PC-9 (cell line): ENCODE measurements at regions of chr7 and their contacts with region 1.

Region 1: DNA sequence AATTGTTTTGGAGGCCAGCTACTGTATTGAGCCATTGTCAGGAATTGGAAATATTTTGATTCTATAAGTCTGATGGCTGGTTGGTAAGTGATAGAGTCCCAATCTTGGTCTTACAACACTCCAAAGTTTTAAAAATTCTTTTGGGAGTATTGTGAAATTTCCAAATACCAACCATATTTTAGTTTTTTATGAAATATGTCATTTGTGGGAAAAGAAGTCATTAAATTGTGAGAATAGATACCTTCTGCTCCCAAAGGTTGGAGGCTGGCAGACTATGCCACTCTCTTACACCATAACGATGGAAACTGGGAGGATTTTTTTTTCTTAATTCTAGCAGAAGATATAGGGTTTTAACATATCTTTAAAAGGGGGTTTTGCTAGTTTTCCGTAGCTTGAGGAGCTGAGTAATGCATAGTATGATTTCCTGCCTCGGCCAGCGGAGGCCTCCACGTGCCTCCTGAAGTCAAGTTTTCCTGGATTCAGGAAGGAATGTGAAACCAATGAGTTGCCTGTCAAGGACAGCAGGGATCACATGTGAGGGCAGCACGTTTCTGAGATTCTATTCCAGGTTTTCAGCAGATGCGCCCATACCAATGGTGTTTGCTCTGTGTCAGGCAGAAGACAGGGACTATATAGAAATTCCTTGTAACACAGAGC is 92.2 kb upstream of the LAMB4 start:
- DNase-seq: no peak
- H3K4me3 ChIP-seq: no peak overlapping the region
- H3K27ac ChIP-seq: no peak overlapping the region
- H3K4me1 ChIP-seq: 0 out of 2 replicates have a peak, but pooled peaks cover 4% of the 10 kb centered on the region
- H3K27me3 ChIP-seq: no peaks in the 10 kb centered on the region
- CTCF ChIP-seq: no peak

Region 2: GRCh38 chr7:108266491-108266890 is 44.1 kb after region 1 on chr7:
- CTCF ChIA-PET with region 1: no interaction called
- POLR2A ChIA-PET with region 1: no interaction called
- intact Hi-C with region 1: loop called (anchors 1 kb)
- DNase-seq: no peak
- H3K4me3 ChIP-seq: no peak overlapping the region
- H3K27ac ChIP-seq: no peak overlapping the region
- H3K4me1 ChIP-seq: peaks cover 15% of the 10 kb centered on the region; the same call in 1 of the 2 replicates
- H3K27me3 ChIP-seq: no peaks in the 10 kb centered on the region
- CTCF ChIP-seq: no peak

Region 3: DNA sequence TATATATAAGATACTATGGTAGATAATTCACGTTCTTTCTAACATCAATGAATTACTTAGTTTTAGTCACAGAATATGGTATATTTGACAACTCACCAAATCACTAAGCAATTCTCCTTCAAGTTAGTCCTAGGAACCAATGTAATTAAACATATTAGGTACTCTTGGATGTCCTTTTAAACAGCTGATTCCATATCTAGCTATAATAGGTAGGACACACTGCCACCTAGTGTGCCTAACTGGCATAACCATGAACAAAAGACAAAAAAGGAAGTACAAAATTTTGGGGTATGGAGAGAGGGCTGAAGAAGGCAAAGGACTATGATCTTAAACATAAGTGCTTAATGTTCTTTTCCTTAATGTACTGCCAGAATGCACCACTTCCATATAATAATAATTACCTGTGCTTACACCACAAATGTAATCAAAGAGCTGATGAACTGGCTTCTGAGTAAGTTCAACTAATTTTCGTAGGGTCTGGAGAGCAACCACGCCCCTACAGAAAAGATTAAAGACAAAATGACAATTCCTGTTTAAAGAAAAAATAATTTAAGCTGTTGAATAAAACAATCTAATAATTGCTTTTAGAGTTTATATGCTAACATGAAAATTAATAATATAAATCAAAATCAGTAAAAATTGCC is 274.8 kb after region 1 on chr7:
- CTCF ChIA-PET with region 1: no interaction called
- POLR2A ChIA-PET with region 1: no interaction called
- intact Hi-C with region 1: no loop called
- DNase-seq: peak; percentile 40 to 49
- H3K4me3 ChIP-seq: no peak overlapping the region
- H3K27ac ChIP-seq: no peak overlapping the region
- H3K4me1 ChIP-seq: no peaks in the 10 kb centered on the region
- H3K27me3 ChIP-seq: no peaks in the 10 kb centered on the region
- CTCF ChIP-seq: peak; percentile 92